ENCODE measurements at regions of chrX and their contacts with region 1.

Region 1: GRCh38 chrX:15471016-15471415 is 22.1 kb downstream of the PIR start:
- DNase-seq: peak in 1 of 2 donors; percentile 82
- H3K4me3 ChIP-seq: no peak overlapping the region
- H3K27ac ChIP-seq: no peak overlapping the region
- H3K4me1 ChIP-seq: no peaks in the 10 kb centered on the region
- H3K27me3 ChIP-seq: no peaks in the 10 kb centered on the region
- CTCF ChIP-seq: peak; percentile 44 to 72 (median 64)

Region 2: GRCh38 chrX:15299941-15300851 is 170.8 kb before region 1 on chrX:
- intact Hi-C with region 1: loop called (anchors 5 kb)
- DNase-seq: no peak
- H3K4me3 ChIP-seq: no peak overlapping the region
- H3K27ac ChIP-seq: no peak overlapping the region
- H3K4me1 ChIP-seq: no peaks in the 10 kb centered on the region
- H3K27me3 ChIP-seq: no peaks in the 10 kb centered on the region
- CTCF ChIP-seq: peak; percentile 8 to 49 (median 33)

Region 3: GRCh38 chrX:15349046-15349445 is 122.0 kb before region 1 on chrX:
- intact Hi-C with region 1: loop called (anchors 2 kb)
- DNase-seq: no peak
- H3K4me3 ChIP-seq: no peak overlapping the region
- H3K27ac ChIP-seq: no peak overlapping the region
- H3K4me1 ChIP-seq: no peaks in the 10 kb centered on the region
- H3K27me3 ChIP-seq: no peaks in the 10 kb centered on the region
- CTCF ChIP-seq: peak in 2 of 3 experiments; percentile 20 to 57

Region 4: DNA sequence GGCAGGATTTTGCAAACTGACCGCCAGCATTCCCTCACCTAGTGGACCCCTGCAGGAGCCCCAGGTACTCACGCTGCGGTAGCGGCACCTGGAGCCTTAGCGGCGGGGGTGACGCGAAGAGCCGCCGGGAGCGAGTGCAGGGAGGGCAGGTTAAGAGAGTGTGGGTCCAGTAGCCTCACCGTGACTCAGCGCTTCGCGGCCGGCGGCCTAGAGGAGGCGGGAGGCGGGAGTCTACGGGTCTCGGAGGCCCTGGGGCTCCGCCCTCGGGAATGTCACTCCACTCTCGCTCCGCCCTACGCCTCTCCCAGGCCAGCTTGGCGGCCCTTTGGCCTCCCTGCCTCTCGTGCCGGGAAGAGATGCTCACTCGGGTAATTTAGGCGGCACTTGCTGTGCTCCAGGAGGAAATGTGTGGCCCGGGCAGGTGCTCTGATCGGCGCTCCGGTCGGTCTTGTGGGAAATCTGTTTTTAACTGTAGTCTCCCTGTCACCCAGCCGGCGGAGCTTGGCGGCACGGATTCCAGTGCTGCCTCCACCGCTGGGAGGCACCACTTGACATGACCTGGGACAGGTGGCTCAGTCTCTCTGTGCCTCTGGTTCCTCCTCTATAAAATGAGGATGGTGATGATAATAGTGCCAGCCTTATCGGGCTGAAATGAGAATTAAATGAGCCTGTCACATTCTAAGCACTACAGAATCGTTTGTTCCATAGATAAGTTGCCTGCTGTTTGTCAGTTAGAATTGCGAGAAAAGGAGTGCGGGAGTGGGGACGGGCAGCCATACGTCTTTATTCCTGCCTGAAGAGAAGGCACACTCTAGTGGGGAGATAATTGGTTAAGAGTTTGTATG is 22.3 kb after region 1 on chrX and contains the start of gene PIR:
- intact Hi-C with region 1: loop called (anchors 2 kb)
- DNase-seq: peak; percentile 57 to 93
- H3K4me3 ChIP-seq: peak within 1 kb of the TSS; percentile 49 to 70
- H3K27ac ChIP-seq: peak within 1 kb of the TSS; percentile 44 to 56
- H3K4me1 ChIP-seq: no peaks in the 10 kb centered on the region
- H3K27me3 ChIP-seq: no peaks in the 10 kb centered on the region
- CTCF ChIP-seq: peak in 2 of 3 experiments; percentile 36 to 56
- total RNA-seq, gene PIR: 14.6 TPM

Region 5: GRCh38 chrX:15564981-15565579 is 94.1 kb after region 1 on chrX:
- intact Hi-C with region 1: loop called (anchors 1 kb)
- DNase-seq: peak in 1 of 2 donors; percentile 74
- H3K4me3 ChIP-seq: no peak overlapping the region
- H3K27ac ChIP-seq: no peak overlapping the region
- H3K4me1 ChIP-seq: no peaks in the 10 kb centered on the region
- H3K27me3 ChIP-seq: no peaks in the 10 kb centered on the region
- CTCF ChIP-seq: peak; percentile 32 to 62 (median 43)

Region 6: GRCh38 chrX:15664487-15665444 is 193.8 kb after region 1 on chrX and contains the start of gene CLTRN:
- intact Hi-C with region 1: no loop called
- DNase-seq: no peak
- H3K4me3 ChIP-seq: no peak within 1 kb of the TSS
- H3K27ac ChIP-seq: no peak within 1 kb of the TSS
- H3K4me1 ChIP-seq: no peaks in the 10 kb centered on the region
- H3K27me3 ChIP-seq: no peaks in the 10 kb centered on the region
- CTCF ChIP-seq: no peak
- total RNA-seq, gene CLTRN: not detected

Region 7: GRCh38 chrX:15694941-15695451 is 224.0 kb after region 1 on chrX:
- intact Hi-C with region 1: no loop called
- DNase-seq: no peak
- H3K4me3 ChIP-seq: no peak overlapping the region
- H3K27ac ChIP-seq: no peak overlapping the region
- H3K4me1 ChIP-seq: no peaks in the 10 kb centered on the region
- H3K27me3 ChIP-seq: no peaks in the 10 kb centered on the region
- CTCF ChIP-seq: no peak

Measured in ascending aorta (tissue), 2 donors.